Mammary epithelial cell (primary cell): ENCODE measurements at regions of chr7 and their contacts with region 1.

Region 1: GRCh38 chr7:122092964-122093797 is 50.9 kb downstream of the AASS start:
- DNase-seq: peak; percentile 72
- H3K4me3 ChIP-seq: no peak overlapping the region
- H3K27ac ChIP-seq: no peak overlapping the region
- H3K4me1 ChIP-seq: peaks cover 7% of the 10 kb centered on the region
- H3K27me3 ChIP-seq: no peaks in the 10 kb centered on the region
- CTCF ChIP-seq: peak; percentile 87 to 98

Region 2: DNA sequence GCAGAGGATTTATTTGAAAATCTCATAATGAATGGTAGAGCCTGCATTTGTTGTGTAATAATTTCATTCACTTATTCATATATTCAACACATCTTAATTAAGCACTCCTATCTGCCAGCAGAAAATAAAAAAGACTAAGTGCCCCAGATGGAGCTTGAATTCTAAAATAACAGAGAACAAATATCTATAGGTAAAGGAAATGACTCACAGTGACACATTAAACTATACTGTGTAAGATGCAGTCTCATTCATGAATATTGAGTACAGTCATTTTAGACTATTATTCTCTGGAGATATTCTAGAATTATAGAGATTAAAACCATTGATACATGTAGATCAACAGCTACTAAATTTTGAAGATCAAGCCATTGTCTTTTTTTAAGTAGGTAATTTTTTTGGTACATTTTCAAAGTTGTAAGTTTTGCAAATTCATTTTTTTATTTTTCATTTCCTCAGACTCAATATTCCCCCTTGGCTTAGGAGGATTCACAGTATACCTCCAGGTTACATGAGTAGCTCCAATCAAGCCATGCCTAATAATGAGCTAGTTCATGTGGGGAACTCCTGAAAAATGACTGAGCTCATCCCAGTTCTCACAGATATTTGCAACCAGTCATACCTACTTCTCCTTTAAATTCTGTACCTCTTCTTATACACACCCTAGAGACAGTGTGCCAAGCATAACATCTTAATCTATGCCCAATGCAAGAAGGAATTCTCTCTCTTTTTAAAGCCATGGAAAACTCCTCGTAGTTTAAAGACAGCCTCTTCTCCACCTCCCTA is 147.9 kb before region 1 on chr7:
- CTCF ChIA-PET with region 1: no interaction called
- dilution Hi-C with region 1: no loop called
- in situ Hi-C with region 1: no loop called
- intact Hi-C with region 1: no loop called
- DNase-seq: peak; percentile 80
- H3K4me3 ChIP-seq: no peak overlapping the region
- H3K27ac ChIP-seq: peak overlapping the region; percentile 69
- H3K4me1 ChIP-seq: peaks cover 25% of the 10 kb centered on the region
- H3K27me3 ChIP-seq: no peaks in the 10 kb centered on the region
- CTCF ChIP-seq: no peak

Region 3: GRCh38 chr7:122143751-122144711 is 50.9 kb after region 1 on chr7 and contains the start of gene AASS:
- CTCF ChIA-PET with region 1: no interaction called
- dilution Hi-C with region 1: no loop called
- in situ Hi-C with region 1: no loop called
- intact Hi-C with region 1: loop called (anchors 1 kb)
- DNase-seq: peak; percentile 89
- H3K4me3 ChIP-seq: peak within 1 kb of the TSS; percentile 75 to 89 (median 78)
- H3K27ac ChIP-seq: peak within 1 kb of the TSS; percentile 63
- H3K4me1 ChIP-seq: peaks cover 9% of the 10 kb centered on the region
- H3K27me3 ChIP-seq: no peaks in the 10 kb centered on the region
- CTCF ChIP-seq: no peak
- total RNA-seq, gene AASS: 2.8 to 10.7 TPM

Region 4: DNA sequence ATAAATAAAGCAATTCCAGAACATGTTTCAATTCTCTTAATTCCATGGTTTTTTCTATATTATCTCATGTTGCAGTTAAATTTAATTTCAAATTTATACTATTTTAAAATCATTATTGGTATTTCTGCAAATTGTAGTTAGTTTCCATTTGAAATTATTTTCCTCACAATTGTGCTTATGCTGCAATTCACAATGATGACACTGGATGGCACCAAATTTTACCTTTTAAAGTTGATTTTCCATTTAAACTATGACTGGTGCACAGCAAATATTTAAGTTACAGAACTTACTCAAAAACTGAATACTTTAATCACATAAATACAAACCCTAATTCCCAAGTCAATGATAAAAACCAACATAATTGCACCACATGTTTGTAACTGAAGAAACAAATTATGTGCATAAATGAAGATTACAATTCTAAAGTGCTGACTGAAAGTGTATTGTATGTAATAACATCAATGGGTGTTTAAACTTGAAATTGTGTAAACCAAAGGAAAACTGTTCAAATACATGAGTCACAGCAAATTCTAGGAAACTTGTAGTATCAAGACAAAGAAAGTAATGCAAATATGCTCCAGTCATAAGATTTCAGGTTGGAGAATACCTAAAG is 126.2 kb after region 1 on chr7:
- CTCF ChIA-PET with region 1: no interaction called
- dilution Hi-C with region 1: no loop called
- in situ Hi-C with region 1: no loop called
- intact Hi-C with region 1: loop called (anchors 5 kb)
- DNase-seq: peak; percentile 3
- H3K4me3 ChIP-seq: no peak overlapping the region
- H3K27ac ChIP-seq: no peak overlapping the region
- H3K4me1 ChIP-seq: no peaks in the 10 kb centered on the region
- H3K27me3 ChIP-seq: no peaks in the 10 kb centered on the region
- CTCF ChIP-seq: peak; percentile 67 to 74